HepG2 (cell line): ENCODE measurements at regions of chr1 and their contacts with region 1.

Region 1: DNA sequence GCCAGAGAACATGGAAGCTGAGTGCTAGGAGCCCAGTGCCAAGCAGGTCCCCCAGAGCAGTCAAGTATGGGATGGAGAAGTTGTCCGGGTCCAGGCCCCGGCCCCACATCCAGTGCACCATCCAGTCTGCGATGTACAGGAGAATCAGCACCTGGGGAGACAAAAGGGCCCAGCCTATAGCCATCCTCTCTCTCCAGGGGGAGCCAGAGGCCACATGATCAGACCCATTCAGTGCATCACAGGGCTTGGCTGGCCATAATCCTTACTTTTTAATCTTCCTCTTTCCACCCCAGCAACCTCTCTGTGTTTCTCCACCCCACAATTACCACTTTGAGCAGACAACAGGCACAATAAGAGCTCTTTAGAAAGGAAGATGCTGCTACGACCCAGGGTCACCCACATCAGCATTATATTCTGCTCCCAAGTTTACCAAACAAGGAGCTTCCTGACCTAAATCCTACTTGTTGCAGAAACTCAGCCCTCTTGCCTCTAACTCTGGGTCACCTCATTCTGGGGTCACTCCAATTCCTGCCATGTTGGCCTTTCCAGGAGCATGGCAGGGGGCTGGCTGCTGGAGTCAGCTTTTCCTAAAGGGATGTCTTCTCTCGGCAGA is 16.4 kb upstream of the RAB29 start:
- DNase-seq: peak; percentile 48
- ATAC-seq: peak; percentile 99
- H3K4me3 ChIP-seq: no peak overlapping the region
- H3K27ac ChIP-seq: no peak overlapping the region
- H3K4me1 ChIP-seq: no peaks in the 10 kb centered on the region
- H3K27me3 ChIP-seq: no peaks in the 10 kb centered on the region; a peak in 1 of 5 replicates
- CTCF ChIP-seq: peak; percentile 87
- EP300 ChIP-seq: no peak
- POLR2A ChIP-seq: no peak
- RAD21 ChIP-seq: peak; percentile 81

Region 2: GRCh38 chr1:205907794-205908193 is 116.1 kb after region 1 on chr1:
- CTCF ChIA-PET with region 1: interaction called, 37 read pairs
- POLR2A ChIA-PET with region 1: no interaction called
- in situ Hi-C with region 1: loop called (anchors 5 kb)
- intact Hi-C with region 1: loop called (anchors 1 kb)
- DNase-seq: no peak
- ATAC-seq: peak; percentile 79
- H3K4me3 ChIP-seq: no peak overlapping the region
- H3K27ac ChIP-seq: no peak overlapping the region
- H3K4me1 ChIP-seq: no peaks in the 10 kb centered on the region
- H3K27me3 ChIP-seq: no peaks in the 10 kb centered on the region
- CTCF ChIP-seq: peak; percentile 63
- EP300 ChIP-seq: no peak
- POLR2A ChIP-seq: no peak
- RAD21 ChIP-seq: 0 out of 2 replicates have a peak, but pooled peaks have one; percentile 39

Region 3: GRCh38 chr1:205913451-205914155 is 121.9 kb after region 1 on chr1:
- CTCF ChIA-PET with region 1: interaction called, 5 read pairs
- POLR2A ChIA-PET with region 1: no interaction called
- in situ Hi-C with region 1: loop called (anchors 5 kb)
- intact Hi-C with region 1: no loop called
- DNase-seq: no peak
- ATAC-seq: no peak
- H3K4me3 ChIP-seq: no peak overlapping the region
- H3K27ac ChIP-seq: no peak overlapping the region
- H3K4me1 ChIP-seq: peaks cover 12% of the 10 kb centered on the region; the same call in 1 of the 2 replicates
- H3K27me3 ChIP-seq: peaks cover 0 to 3% of the 10 kb centered on the region in 2 experiments; a peak in 1 of 5 replicates
- CTCF ChIP-seq: no peak
- EP300 ChIP-seq: no peak
- POLR2A ChIP-seq: no peak
- RAD21 ChIP-seq: no peak

Region 4: GRCh38 chr1:205977402-205978014 is 185.8 kb after region 1 on chr1:
- CTCF ChIA-PET with region 1: interaction called, 19 read pairs
- POLR2A ChIA-PET with region 1: no interaction called
- in situ Hi-C with region 1: no loop called
- intact Hi-C with region 1: loop called (anchors 1 kb)
- DNase-seq: peak; percentile 67
- ATAC-seq: peak; percentile 89
- H3K4me3 ChIP-seq: no peak overlapping the region
- H3K27ac ChIP-seq: no peak overlapping the region
- H3K4me1 ChIP-seq: peaks cover 13% of the 10 kb centered on the region
- H3K27me3 ChIP-seq: peaks cover 3 to 15% of the 10 kb centered on the region in 2 experiments; a peak in 3 of 5 replicates
- CTCF ChIP-seq: peak; percentile 93
- EP300 ChIP-seq: no peak
- POLR2A ChIP-seq: no peak
- RAD21 ChIP-seq: peak; percentile 88